ENCODE measurements at regions of chr7 and their contacts with region 1.

Region 1: DNA sequence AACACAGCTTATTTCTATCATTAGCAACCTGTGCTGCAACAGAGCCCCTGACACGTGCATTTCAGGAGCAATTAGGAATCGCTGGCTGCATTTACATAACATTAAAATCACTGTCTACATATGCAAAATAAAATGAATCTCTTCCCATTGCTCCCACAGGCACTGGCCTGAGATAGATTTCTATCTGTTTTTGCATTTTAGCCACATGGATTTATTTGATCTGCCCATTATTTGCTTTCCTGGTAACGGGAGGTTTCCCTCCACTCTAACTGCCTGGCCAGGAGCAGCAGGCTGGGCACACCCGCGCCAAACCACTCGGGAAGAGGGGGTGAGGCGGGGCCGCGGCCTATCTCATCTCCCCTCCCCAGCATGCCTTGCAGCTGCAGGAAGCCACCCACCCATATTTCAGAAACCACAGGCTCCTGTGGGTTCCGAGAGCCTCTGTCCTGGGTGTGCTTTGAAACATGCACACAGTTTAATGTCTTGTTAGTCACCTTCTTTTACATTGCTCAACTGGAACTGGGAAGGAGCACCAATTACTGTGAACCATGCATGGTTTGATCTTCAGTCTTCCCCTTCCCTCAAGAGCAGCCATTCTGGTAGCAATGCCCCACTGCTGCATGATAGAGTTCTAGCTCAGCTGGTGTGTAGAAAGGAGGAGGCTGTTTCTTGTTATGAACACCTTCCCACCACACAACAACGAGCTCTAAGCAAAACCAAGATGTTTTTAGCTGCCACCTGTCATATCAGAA is 37.7 kb upstream of the IKZF1 start:
- DNase-seq: peak; percentile 92
- ATAC-seq: peak; percentile 62
- H3K4me3 Mint-ChIP-seq: peak overlapping the region; percentile 63
- H3K27ac Mint-ChIP-seq: peak overlapping the region; percentile 92
- H3K4me1 Mint-ChIP-seq: peaks cover 93% of the 10 kb centered on the region
- H3K27me3 Mint-ChIP-seq: no peaks in the 10 kb centered on the region
- CTCF ChIP-seq: no peak

Region 2: DNA sequence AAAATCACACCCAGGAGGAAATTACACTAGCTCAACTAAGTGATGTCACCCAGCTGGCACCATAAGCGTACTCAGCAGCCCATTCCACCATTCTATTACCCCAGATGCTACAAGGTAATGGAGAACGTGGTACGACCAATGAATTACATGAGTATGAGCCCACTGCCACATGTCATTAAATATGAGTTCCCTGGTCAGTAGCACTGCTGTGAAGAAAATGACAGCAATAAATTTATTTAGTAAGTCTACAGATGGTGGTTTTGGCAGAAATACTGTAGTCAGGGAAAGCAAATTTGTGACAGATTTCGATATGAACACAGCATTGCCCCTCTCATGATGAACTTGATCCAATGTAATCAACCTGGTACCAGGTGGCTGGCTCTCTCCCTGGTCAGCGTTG is 339.2 kb before region 1 on chr7:
- CTCF ChIA-PET with region 1: no interaction called
- POLR2A ChIA-PET with region 1: no interaction called
- intact Hi-C with region 1: no loop called
- DNase-seq: no peak
- ATAC-seq: no peak
- H3K4me3 Mint-ChIP-seq: no peak overlapping the region
- H3K27ac Mint-ChIP-seq: no peak overlapping the region
- H3K4me1 Mint-ChIP-seq: no peaks in the 10 kb centered on the region
- H3K27me3 Mint-ChIP-seq: no peaks in the 10 kb centered on the region
- CTCF ChIP-seq: no peak

Region 3: GRCh38 chr7:50142425-50143017 is 124.3 kb before region 1 on chr7:
- CTCF ChIA-PET with region 1: interaction called, 4 read pairs
- POLR2A ChIA-PET with region 1: interaction called, 4 read pairs
- intact Hi-C with region 1: loop called (anchors 10 kb)
- DNase-seq: peak; percentile 56
- ATAC-seq: peak; percentile 68
- H3K4me3 Mint-ChIP-seq: peak overlapping the region; percentile 50
- H3K27ac Mint-ChIP-seq: peak overlapping the region; percentile 87
- H3K4me1 Mint-ChIP-seq: peaks cover 43% of the 10 kb centered on the region
- H3K27me3 Mint-ChIP-seq: peaks cover 3% of the 10 kb centered on the region
- CTCF ChIP-seq: peak; percentile 89

Region 4: GRCh38 chr7:50166997-50167965 is 99.5 kb before region 1 on chr7:
- CTCF ChIA-PET with region 1: no interaction called
- POLR2A ChIA-PET with region 1: no interaction called
- intact Hi-C with region 1: no loop called
- DNase-seq: peak; percentile 69
- ATAC-seq: peak; percentile 92
- H3K4me3 Mint-ChIP-seq: peak overlapping the region; percentile 14
- H3K27ac Mint-ChIP-seq: peak overlapping the region; percentile 95
- H3K4me1 Mint-ChIP-seq: peaks cover 56% of the 10 kb centered on the region
- H3K27me3 Mint-ChIP-seq: no peaks in the 10 kb centered on the region
- CTCF ChIP-seq: no peak

Region 5: DNA sequence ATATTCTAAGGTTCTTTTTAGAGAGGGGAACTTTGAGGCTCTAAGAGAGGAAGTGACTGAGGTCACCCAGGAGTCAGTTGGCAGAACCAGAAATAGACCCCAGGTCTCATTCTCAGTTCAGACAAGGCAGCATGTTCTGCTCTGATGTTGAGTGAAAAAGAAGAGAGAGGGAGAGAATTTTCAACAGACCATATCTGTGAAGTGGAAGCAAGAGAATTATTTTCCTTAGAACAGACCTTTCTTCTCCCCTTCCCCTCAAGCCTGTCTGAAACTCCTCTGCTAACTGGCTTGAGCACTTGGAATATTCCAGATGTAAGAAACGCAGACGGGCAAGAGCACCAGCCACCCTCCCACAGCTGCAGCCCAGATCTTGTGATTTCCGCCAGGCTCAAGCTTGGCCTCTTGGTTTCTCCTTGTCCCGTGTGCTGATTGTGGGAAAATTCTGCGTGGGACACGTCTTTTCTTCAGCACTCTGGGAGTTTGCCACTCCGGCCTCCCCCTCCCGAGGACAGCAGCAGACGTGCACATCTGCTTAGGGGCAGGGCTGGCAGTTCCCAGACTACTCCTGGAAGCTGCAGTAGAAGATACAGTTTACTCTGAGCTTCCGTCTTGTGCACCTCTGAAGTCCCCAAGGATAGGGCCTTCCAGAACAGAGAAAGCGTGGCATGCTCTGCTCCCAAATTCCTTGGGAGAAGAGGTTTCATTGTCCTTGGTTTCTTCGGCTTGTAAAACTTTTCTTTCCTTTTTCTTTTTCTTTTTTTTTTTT is 15.1 kb after region 1 on chr7:
- CTCF ChIA-PET with region 1: interaction called, 25 read pairs
- POLR2A ChIA-PET with region 1: interaction called, 35 read pairs
- intact Hi-C with region 1: no loop called
- DNase-seq: peak; percentile 45
- ATAC-seq: peak; percentile 78
- H3K4me3 Mint-ChIP-seq: peak overlapping the region; percentile 63
- H3K27ac Mint-ChIP-seq: peak overlapping the region; percentile 89
- H3K4me1 Mint-ChIP-seq: peaks cover 63% of the 10 kb centered on the region
- H3K27me3 Mint-ChIP-seq: no peaks in the 10 kb centered on the region
- CTCF ChIP-seq: no peak

Region 6: GRCh38 chr7:50317221-50317678 is 50.4 kb after region 1 on chr7:
- CTCF ChIA-PET with region 1: interaction called, 7 read pairs
- POLR2A ChIA-PET with region 1: interaction called, 133 read pairs
- intact Hi-C with region 1: no loop called
- DNase-seq: peak; percentile 75
- ATAC-seq: peak; percentile 82
- H3K4me3 Mint-ChIP-seq: peak overlapping the region; percentile 94
- H3K27ac Mint-ChIP-seq: peak overlapping the region; percentile 97
- H3K4me1 Mint-ChIP-seq: peaks cover 88% of the 10 kb centered on the region
- H3K27me3 Mint-ChIP-seq: no peaks in the 10 kb centered on the region
- CTCF ChIP-seq: peak; percentile 7